IMR-90 (cell line): ENCODE measurements at regions of chr12 and their contacts with region 1.

Region 1: GRCh38 chr12:114684098-114684869 is at the start of gene TBX3:
- DNase-seq: peak; percentile 99
- ATAC-seq: peak; percentile 81
- H3K4me3 ChIP-seq: peak within 1 kb of the TSS; percentile 69
- H3K27ac ChIP-seq: peak within 1 kb of the TSS; percentile 95
- H3K4me1 ChIP-seq: peaks cover 29% of the 10 kb centered on the region
- H3K27me3 ChIP-seq: no peaks in the 10 kb centered on the region
- CTCF ChIP-seq: peak; percentile 66
- POLR2A ChIP-seq: peak; percentile 98
- RAD21 ChIP-seq: peak; percentile 60
- total RNA-seq, gene TBX3: 15.8 and 18.6 TPM in 2 replicates

Region 2: GRCh38 chr12:114711689-114712152 is 27.4 kb after region 1 on chr12:
- CTCF ChIA-PET with region 1: interaction called, 3 read pairs
- POLR2A ChIA-PET with region 1: interaction called, 13 read pairs
- dilution Hi-C with region 1: no loop called
- in situ Hi-C with region 1: no loop called
- intact Hi-C with region 1: no loop called
- DNase-seq: no peak
- ATAC-seq: no peak
- H3K4me3 ChIP-seq: no peak overlapping the region
- H3K27ac ChIP-seq: no peak overlapping the region
- H3K4me1 ChIP-seq: no peaks in the 10 kb centered on the region
- H3K27me3 ChIP-seq: peaks cover 3% of the 10 kb centered on the region
- CTCF ChIP-seq: no peak
- POLR2A ChIP-seq: no peak
- RAD21 ChIP-seq: no peak

Region 3: GRCh38 chr12:114848666-114849065 is 164.4 kb after region 1 on chr12:
- CTCF ChIA-PET with region 1: no interaction called
- POLR2A ChIA-PET with region 1: no interaction called
- dilution Hi-C with region 1: no loop called
- in situ Hi-C with region 1: no loop called
- intact Hi-C with region 1: loop called (anchors 2 kb)
- DNase-seq: peak; percentile 93
- ATAC-seq: peak; percentile 95
- H3K4me3 ChIP-seq: no peak overlapping the region
- H3K27ac ChIP-seq: no peak overlapping the region; the same call in 1 of the 2 replicates
- H3K4me1 ChIP-seq: peaks cover 9% of the 10 kb centered on the region
- H3K27me3 ChIP-seq: no peaks in the 10 kb centered on the region
- CTCF ChIP-seq: no peak
- POLR2A ChIP-seq: no peak
- RAD21 ChIP-seq: no peak

Region 4: DNA sequence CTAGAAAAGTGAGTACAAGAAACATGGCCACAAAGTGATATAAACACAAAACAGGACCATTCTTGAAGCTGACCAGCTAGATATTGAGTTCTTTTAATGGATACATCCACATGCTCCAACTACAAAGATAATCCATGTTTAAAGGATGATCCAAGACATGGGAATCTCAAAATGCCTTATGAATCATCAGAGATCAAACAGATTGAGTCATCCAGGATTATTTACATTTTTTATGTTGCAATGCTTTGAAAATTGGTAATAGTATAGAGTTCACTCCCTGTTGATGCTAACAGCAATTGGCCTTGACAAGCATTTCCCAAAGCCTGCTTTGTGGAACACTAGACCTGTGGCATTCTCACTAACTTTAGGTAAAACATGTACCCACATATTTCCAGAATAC is 292.7 kb after region 1 on chr12:
- CTCF ChIA-PET with region 1: no interaction called
- POLR2A ChIA-PET with region 1: no interaction called
- dilution Hi-C with region 1: no loop called
- in situ Hi-C with region 1: no loop called
- intact Hi-C with region 1: loop called (anchors 5 kb)
- DNase-seq: peak; percentile 88
- ATAC-seq: peak; percentile 72
- H3K4me3 ChIP-seq: no peak overlapping the region
- H3K27ac ChIP-seq: no peak overlapping the region
- H3K4me1 ChIP-seq: no peaks in the 10 kb centered on the region; the same call in 1 of the 2 replicates
- H3K27me3 ChIP-seq: no peaks in the 10 kb centered on the region
- CTCF ChIP-seq: no peak
- POLR2A ChIP-seq: no peak
- RAD21 ChIP-seq: peak; percentile 3; the same call in 1 of the 2 replicates

Region 5: DNA sequence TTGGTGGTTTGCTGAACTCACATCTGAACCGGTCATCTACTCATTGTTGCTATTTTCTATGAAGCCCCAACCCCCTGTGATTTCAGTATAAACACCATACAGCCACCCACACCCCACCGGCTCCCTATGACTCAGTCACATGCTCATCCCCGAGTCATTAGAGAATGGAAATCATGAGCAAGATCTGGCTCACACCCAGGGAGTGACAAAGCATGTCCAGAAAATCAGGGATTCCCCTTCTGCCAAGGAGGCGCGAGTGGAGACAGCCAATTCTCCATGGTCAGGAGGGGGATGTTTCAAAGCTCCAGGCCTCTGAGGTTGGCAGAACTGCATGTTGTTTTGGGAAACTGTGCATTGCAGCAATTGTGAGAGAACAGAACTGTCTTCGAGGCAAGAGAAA is 657.2 kb after region 1 on chr12:
- CTCF ChIA-PET with region 1: no interaction called
- POLR2A ChIA-PET with region 1: interaction called, 7 read pairs
- dilution Hi-C with region 1: no loop called
- in situ Hi-C with region 1: loop called (anchors 5 kb)
- intact Hi-C with region 1: no loop called
- DNase-seq: peak; percentile 100
- ATAC-seq: peak; percentile 81
- H3K4me3 ChIP-seq: no peak overlapping the region
- H3K27ac ChIP-seq: peak overlapping the region; percentile 35; the same call in 1 of the 2 replicates
- H3K4me1 ChIP-seq: peaks cover 10% of the 10 kb centered on the region
- H3K27me3 ChIP-seq: no peaks in the 10 kb centered on the region
- CTCF ChIP-seq: no peak
- POLR2A ChIP-seq: no peak
- RAD21 ChIP-seq: peak; percentile 47

Region 6: GRCh38 chr12:115752913-115753726 is 1068.8 kb after region 1 on chr12:
- CTCF ChIA-PET with region 1: no interaction called
- POLR2A ChIA-PET with region 1: interaction called, 3 read pairs
- dilution Hi-C with region 1: no loop called
- in situ Hi-C with region 1: loop called (anchors 5 kb)
- intact Hi-C with region 1: loop called (anchors 5 kb)
- DNase-seq: peak; percentile 77
- ATAC-seq: peak; percentile 100
- H3K4me3 ChIP-seq: no peak overlapping the region
- H3K27ac ChIP-seq: no peak overlapping the region
- H3K4me1 ChIP-seq: no peaks in the 10 kb centered on the region
- H3K27me3 ChIP-seq: peaks cover 12% of the 10 kb centered on the region
- CTCF ChIP-seq: peak; percentile 81
- POLR2A ChIP-seq: no peak
- RAD21 ChIP-seq: peak; percentile 93